ENCODE measurements at regions of chr11 and their contacts with region 1.

Region 1: GRCh38 chr11:75582895-75583717 is 21.1 kb downstream of the SERPINH1 start:
- DNase-seq: peak; percentile 66 to 68
- ATAC-seq: peak; percentile 68 to 93 (median 88)
- H3K4me3 ChIP-seq: peak overlapping the region; percentile 81 to 98 (median 88)
- H3K27ac ChIP-seq: peak overlapping the region; percentile 98 to 100 (median 98)
- H3K4me1 ChIP-seq: peaks cover 5 to 39% (median 25%) of the 10 kb centered on the region in 9 donors
- H3K27me3 ChIP-seq: no peaks in the 10 kb centered on the region
- CTCF ChIP-seq: peak in 6 of 9 donors; percentile 30 to 55 (median 42)

Region 2: DNA sequence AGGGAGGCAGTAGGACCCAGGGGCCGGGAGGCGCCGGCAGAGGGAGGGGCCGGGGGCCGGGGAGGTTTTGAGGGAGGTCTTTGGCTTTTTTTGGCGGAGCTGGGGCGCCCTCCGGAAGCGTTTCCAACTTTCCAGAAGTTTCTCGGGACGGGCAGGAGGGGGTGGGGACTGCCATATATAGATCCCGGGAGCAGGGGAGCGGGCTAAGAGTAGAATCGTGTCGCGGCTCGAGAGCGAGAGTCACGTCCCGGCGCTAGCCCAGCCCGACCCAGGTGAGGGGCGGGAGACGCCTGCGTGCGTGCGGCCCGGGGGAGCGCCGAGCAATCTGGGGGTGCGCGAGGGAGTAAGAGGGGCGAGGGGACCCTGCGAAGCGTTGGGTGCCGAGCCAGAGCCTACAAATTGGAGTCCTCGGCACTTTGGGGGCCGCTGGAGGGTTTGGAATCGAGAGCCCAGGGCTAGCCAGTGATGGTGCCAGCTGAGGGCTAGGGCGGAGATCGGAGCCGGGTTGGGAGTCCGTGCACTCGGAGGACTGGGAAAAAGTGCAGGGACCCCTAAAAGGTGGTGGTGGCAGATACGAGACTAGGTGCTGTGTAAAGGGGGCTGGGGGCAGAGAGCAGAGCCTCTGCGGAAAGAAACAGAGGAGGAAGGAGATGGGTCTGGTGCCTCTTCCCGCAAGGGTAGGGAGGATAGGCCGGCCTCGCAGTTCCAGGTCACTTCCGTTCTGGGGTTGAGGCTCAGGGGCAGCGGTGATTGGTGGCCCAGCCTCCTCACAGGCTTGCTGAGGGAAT is 20.9 kb before region 1 on chr11 and contains the start of gene SERPINH1:
- intact Hi-C with region 1: loop called in 1 of 10 experiments (anchors 2 kb)
- DNase-seq: peak; percentile 88 to 95
- ATAC-seq: peak; percentile 73 to 86 (median 82)
- H3K4me3 ChIP-seq: peak within 1 kb of the TSS; percentile 72 to 99 (median 88)
- H3K27ac ChIP-seq: peak within 1 kb of the TSS; percentile 98 to 100 (median 99)
- H3K4me1 ChIP-seq: peaks cover 28 to 89% (median 86%) of the 10 kb centered on the region in 9 donors
- H3K27me3 ChIP-seq: no peaks in the 10 kb centered on the region
- CTCF ChIP-seq: peak in 1 of 9 donors; percentile 14
- total RNA-seq, gene SERPINH1: 31.8 to 130 (median 53.2) TPM

Region 3: DNA sequence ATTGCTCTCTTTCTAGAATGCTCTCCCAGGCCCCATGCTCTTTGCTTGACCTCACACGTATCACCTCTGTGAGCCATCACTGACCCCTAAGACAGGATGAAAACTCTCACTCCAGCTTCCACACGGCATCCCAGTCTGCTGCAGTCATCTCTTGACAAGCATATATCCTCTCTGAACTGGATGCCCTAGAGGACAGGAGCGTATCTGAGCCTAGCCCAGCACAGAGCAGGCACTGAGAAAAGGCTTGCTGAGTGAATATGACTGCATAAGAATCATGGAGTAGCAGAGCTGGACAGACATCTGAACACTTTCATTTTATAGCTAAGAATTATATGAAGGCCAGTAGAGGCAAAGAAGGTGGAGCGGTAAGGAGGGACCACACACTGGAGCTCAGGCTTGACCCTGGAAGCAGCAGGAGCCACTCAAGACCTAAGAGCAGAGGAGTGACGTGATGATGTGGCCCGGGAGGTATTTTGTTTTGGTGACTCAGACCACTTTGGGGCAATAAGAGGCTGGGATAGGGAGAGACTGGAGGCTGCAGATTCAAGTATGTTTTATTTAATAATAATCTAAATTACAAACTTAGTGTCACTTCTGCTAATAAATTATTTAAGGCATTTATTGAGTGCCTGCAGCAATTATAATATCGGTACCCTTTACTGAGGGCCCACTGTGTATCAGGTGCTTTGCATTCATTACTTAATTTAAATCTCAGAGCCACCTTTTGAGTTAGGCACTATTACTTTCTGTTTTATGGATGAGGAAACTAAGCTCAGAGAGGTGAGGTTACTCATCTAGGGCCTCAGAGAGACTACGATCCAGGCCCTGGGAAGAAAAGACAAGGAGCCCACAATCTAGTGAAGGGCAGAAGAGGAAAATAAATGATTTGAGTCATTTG is 43.1 kb after region 1 on chr11:
- intact Hi-C with region 1: no loop called
- DNase-seq: no peak
- ATAC-seq: no peak
- H3K4me3 ChIP-seq: no peak overlapping the region
- H3K27ac ChIP-seq: no peak overlapping the region
- H3K4me1 ChIP-seq: peaks cover 0 to 2% (median 0%) of the 10 kb centered on the region in 9 donors
- H3K27me3 ChIP-seq: no peaks in the 10 kb centered on the region
- CTCF ChIP-seq: no peak

Measured in heart right ventricle (tissue), 16 donors.